ENCODE measurements at regions of chr1 and their contacts with region 1.

Region 1: GRCh38 chr1:206912445-206913095 is 9.2 kb downstream of the FCMR start:
- DNase-seq: peak; percentile 77
- ATAC-seq: peak; percentile 45
- H3K4me3 Mint-ChIP-seq: no peak overlapping the region
- H3K27ac Mint-ChIP-seq: peak overlapping the region; percentile 63
- H3K4me1 Mint-ChIP-seq: peaks cover 86% of the 10 kb centered on the region
- H3K27me3 Mint-ChIP-seq: no peaks in the 10 kb centered on the region
- CTCF ChIP-seq: peak; percentile 80

Region 2: DNA sequence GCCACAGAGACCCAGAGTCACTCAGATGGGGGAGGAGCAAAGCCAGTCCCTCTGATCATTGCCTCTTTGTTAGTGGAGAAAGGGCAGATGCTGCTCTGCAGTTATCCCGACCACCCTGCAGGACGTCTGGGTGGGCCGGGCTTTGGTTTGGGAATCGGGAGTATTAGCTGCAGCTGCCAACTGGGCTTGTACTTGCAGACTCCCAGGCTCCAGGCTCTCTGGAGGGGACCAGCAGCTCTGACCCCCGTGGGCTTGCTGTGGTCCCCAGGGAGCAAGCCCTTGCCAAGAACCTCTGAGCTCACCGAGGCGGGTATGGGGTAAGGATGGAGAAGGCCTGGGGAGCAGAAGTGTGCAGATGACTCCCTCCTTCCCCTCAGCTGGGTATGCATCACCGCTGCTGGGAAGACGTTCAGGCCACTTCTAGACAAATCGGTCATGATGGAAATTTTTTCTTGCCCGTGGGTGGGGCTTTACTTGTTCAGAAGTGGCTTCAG is 206.2 kb before region 1 on chr1:
- CTCF ChIA-PET with region 1: interaction called, 19 read pairs
- POLR2A ChIA-PET with region 1: interaction called, 3 read pairs
- intact Hi-C with region 1: no loop called
- DNase-seq: peak; percentile 84
- ATAC-seq: peak; percentile 49
- H3K4me3 Mint-ChIP-seq: no peak overlapping the region
- H3K27ac Mint-ChIP-seq: peak overlapping the region; percentile 28
- H3K4me1 Mint-ChIP-seq: peaks cover 83% of the 10 kb centered on the region
- H3K27me3 Mint-ChIP-seq: no peaks in the 10 kb centered on the region
- CTCF ChIP-seq: no peak

Region 3: DNA sequence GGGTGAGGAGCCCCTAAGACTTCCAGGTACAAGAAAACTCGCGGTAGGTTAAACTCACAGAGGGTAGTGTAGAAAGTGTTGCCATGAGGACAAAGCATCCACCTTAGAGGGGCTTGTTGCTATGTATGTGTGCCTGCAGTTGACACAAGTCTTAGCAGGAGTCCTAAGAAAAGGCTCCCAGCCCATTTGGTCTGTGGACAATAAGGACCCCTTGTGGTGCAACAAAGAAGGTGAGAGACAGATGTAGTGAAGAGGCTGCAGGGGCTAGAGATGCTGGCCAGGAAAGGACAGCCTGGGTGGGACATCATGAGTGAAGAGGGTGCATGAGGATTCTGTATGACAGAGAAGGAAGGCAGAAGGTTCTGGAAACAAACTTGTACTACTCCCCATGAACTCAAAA is 104.0 kb before region 1 on chr1:
- CTCF ChIA-PET with region 1: interaction called, 196 read pairs
- POLR2A ChIA-PET with region 1: interaction called, 5 read pairs
- intact Hi-C with region 1: loop called (anchors 2 kb)
- DNase-seq: peak; percentile 69
- ATAC-seq: peak; percentile 89
- H3K4me3 Mint-ChIP-seq: no peak overlapping the region
- H3K27ac Mint-ChIP-seq: no peak overlapping the region
- H3K4me1 Mint-ChIP-seq: peaks cover 49% of the 10 kb centered on the region
- H3K27me3 Mint-ChIP-seq: no peaks in the 10 kb centered on the region
- CTCF ChIP-seq: peak; percentile 69

Region 4: DNA sequence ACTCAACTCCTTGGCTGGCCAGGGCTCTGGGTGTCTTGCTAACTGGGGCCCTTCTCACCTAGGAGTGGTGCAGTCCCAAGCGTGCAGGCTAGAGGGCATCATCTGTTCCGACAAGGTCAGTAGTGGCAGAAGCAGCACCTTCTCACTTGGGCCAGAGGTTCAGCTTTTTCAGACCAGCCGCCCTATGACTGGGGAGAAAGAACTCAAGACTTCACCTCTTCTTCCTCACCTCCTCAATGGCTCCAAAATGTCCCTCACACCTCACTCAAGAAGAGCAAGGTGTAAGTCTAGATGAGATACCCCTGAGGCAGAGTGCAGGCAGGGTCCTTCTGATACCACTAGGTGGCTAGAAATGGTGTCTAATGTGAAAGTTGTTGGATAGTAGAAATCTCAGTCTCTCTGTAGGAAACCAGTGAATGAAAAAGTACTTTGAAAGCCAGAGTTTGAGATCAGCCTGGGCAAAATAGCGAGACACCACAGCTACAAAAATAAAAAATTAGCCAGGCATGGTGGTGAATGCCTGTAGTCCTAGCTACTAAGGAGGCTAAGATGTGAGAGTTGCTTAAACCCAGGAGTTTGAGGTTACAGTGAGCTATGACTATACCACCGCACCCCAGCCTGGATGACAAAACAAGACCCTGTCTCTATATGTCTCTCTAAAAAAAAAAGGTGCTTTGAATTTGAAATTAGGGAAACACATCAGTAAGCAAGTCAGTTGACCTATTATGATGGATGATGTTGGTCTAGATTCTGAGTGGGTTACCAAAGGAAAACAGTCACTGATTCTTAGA is 55.7 kb before region 1 on chr1:
- CTCF ChIA-PET with region 1: interaction called, 48 read pairs
- POLR2A ChIA-PET with region 1: interaction called, 4 read pairs
- intact Hi-C with region 1: no loop called
- DNase-seq: peak; percentile 30
- ATAC-seq: peak; percentile 72
- H3K4me3 Mint-ChIP-seq: no peak overlapping the region
- H3K27ac Mint-ChIP-seq: no peak overlapping the region
- H3K4me1 Mint-ChIP-seq: peaks cover 11% of the 10 kb centered on the region
- H3K27me3 Mint-ChIP-seq: no peaks in the 10 kb centered on the region
- CTCF ChIP-seq: peak; percentile 58

Region 5: DNA sequence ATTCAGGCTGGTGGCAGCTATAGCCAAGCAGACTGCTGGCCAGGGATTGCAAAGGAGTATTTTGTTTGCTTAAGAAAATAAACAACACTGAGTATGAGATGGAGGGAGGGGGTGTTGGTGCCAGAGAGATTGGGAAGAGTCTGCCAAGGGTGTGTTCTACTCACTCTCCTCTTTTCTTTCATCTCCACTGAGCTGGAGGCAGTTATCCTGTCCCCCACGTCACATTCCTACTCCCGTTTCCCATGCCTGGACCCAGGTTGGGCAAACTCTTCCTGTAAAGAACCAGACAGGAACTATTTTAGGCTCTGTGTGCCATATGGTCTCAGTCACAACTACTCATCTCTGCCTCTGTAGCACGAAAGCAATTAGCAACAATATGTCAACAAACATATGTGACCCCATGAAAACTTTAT is 16.7 kb before region 1 on chr1:
- CTCF ChIA-PET with region 1: interaction called, 32 read pairs
- POLR2A ChIA-PET with region 1: interaction called, 7 read pairs
- intact Hi-C with region 1: no loop called
- DNase-seq: no peak
- ATAC-seq: no peak
- H3K4me3 Mint-ChIP-seq: no peak overlapping the region
- H3K27ac Mint-ChIP-seq: no peak overlapping the region
- H3K4me1 Mint-ChIP-seq: peaks cover 66% of the 10 kb centered on the region
- H3K27me3 Mint-ChIP-seq: no peaks in the 10 kb centered on the region
- CTCF ChIP-seq: no peak

Region 6: DNA sequence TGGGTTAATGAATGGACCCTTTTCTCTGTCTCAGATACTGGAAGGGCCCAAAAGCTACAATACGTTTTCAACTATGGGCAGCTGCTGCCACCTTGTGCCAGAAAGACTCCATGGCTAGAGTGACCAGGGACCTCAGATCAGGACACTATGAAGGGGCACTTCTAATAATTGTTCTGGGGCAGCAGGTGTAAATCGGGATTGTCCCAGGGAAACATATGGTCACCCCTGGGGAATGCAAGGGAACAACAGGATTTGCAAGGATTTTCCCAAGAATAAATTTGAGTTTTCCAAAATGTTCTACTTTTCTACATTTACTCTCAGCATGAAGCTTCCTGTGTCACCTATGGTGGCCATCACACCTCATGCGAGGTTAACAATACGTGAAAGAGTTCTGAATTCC is 69.6 kb after region 1 on chr1:
- CTCF ChIA-PET with region 1: interaction called, 43 read pairs
- POLR2A ChIA-PET with region 1: no interaction called
- intact Hi-C with region 1: no loop called
- DNase-seq: peak; percentile 79
- ATAC-seq: peak; percentile 82
- H3K4me3 Mint-ChIP-seq: no peak overlapping the region
- H3K27ac Mint-ChIP-seq: no peak overlapping the region
- H3K4me1 Mint-ChIP-seq: no peaks in the 10 kb centered on the region
- H3K27me3 Mint-ChIP-seq: peaks cover 5% of the 10 kb centered on the region
- CTCF ChIP-seq: peak; percentile 78